Activated B cell treated with CpG ODN at 0.5 μM for 24 hours (primary cell): ENCODE measurements at regions of chr11 and their contacts with region 1.

Region 1: GRCh38 chr11:16793511-16793910 is 55.1 kb downstream of the C11orf58 start:
- DNase-seq: no peak
- ATAC-seq: no peak
- H3K4me3 Mint-ChIP-seq: no peak overlapping the region
- H3K27ac Mint-ChIP-seq: no peak overlapping the region
- H3K4me1 Mint-ChIP-seq: peaks cover 5% of the 10 kb centered on the region
- H3K27me3 Mint-ChIP-seq: no peaks in the 10 kb centered on the region
- CTCF ChIP-seq: no peak

Region 2: GRCh38 chr11:16775614-16776283 is 17.8 kb before region 1 on chr11:
- CTCF ChIA-PET with region 1: interaction called, 3 read pairs
- POLR2A ChIA-PET with region 1: no interaction called
- intact Hi-C with region 1: loop called (anchors 1 kb)
- DNase-seq: no peak
- ATAC-seq: no peak
- H3K4me3 Mint-ChIP-seq: no peak overlapping the region
- H3K27ac Mint-ChIP-seq: no peak overlapping the region
- H3K4me1 Mint-ChIP-seq: no peaks in the 10 kb centered on the region
- H3K27me3 Mint-ChIP-seq: no peaks in the 10 kb centered on the region
- CTCF ChIP-seq: no peak

Region 3: GRCh38 chr11:16846305-16846704 is 52.8 kb after region 1 on chr11:
- CTCF ChIA-PET with region 1: no interaction called
- POLR2A ChIA-PET with region 1: no interaction called
- intact Hi-C with region 1: no loop called
- DNase-seq: no peak
- ATAC-seq: no peak
- H3K4me3 Mint-ChIP-seq: no peak overlapping the region
- H3K27ac Mint-ChIP-seq: no peak overlapping the region
- H3K4me1 Mint-ChIP-seq: no peaks in the 10 kb centered on the region
- H3K27me3 Mint-ChIP-seq: no peaks in the 10 kb centered on the region
- CTCF ChIP-seq: no peak

Region 4: GRCh38 chr11:16935518-16936302 is 142.2 kb after region 1 on chr11:
- CTCF ChIA-PET with region 1: no interaction called
- POLR2A ChIA-PET with region 1: no interaction called
- intact Hi-C with region 1: no loop called
- DNase-seq: no peak
- ATAC-seq: no peak
- H3K4me3 Mint-ChIP-seq: no peak overlapping the region
- H3K27ac Mint-ChIP-seq: no peak overlapping the region
- H3K4me1 Mint-ChIP-seq: peaks cover 1% of the 10 kb centered on the region
- H3K27me3 Mint-ChIP-seq: no peaks in the 10 kb centered on the region
- CTCF ChIP-seq: no peak